Psoas muscle (tissue), 8 donors: ENCODE measurements at regions of chr17 and their contacts with region 1.

Region 1: GRCh38 chr17:2094891-2095535 is 40.1 kb downstream of the HIC1 start:
- DNase-seq: peak in 1 of 2 donors; percentile 75
- ATAC-seq: peak; percentile 81 to 88 (median 86)
- H3K4me3 ChIP-seq: no peak overlapping the region
- H3K27ac ChIP-seq: peak overlapping the region; percentile 2
- H3K4me1 ChIP-seq: peaks cover 6% of the 10 kb centered on the region
- H3K27me3 ChIP-seq: no peaks in the 10 kb centered on the region
- CTCF ChIP-seq: peak; percentile 57

Region 2: DNA sequence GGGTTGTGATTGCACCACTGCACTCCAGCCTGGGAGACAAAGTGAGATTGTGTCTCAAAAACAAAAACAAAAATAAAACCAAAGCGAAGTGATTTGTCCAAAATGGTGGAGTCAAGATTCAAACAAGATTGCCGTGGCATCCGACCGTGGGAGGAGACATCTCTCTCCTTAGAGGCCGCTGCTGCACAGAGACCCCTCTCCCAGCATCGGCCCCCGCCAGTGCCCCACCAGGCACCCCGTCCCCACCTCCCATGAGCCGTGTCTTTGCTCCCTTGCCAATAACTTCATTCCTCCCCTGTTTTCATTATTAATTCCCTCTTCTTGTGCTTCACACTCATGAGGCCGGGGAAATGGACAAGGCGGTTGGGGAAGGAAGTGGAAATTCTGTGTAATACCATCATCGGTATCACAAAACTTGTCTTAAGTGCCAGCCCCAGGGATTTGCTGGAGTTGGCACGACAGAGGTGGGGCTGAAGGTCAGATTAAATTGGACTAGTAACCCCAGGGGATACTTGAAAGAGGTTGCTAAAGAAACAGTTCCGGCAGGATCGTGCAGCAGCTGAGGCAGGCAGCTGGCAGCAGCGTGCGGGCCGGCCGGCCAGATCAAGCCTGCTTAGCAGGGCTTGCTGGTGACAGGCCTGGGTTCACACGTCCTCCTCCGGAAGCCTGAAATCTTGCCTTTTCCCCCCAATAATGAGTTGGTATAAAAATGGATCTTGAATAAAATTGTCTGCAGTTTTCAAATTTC is 136.7 kb before region 1 on chr17:
- intact Hi-C with region 1: no loop called
- DNase-seq: no peak
- ATAC-seq: peak; percentile 55 to 76 (median 67)
- H3K4me3 ChIP-seq: no peak overlapping the region
- H3K27ac ChIP-seq: peak overlapping the region; percentile 7
- H3K4me1 ChIP-seq: peaks cover 13% of the 10 kb centered on the region
- H3K27me3 ChIP-seq: no peaks in the 10 kb centered on the region
- CTCF ChIP-seq: no peak

Region 3: DNA sequence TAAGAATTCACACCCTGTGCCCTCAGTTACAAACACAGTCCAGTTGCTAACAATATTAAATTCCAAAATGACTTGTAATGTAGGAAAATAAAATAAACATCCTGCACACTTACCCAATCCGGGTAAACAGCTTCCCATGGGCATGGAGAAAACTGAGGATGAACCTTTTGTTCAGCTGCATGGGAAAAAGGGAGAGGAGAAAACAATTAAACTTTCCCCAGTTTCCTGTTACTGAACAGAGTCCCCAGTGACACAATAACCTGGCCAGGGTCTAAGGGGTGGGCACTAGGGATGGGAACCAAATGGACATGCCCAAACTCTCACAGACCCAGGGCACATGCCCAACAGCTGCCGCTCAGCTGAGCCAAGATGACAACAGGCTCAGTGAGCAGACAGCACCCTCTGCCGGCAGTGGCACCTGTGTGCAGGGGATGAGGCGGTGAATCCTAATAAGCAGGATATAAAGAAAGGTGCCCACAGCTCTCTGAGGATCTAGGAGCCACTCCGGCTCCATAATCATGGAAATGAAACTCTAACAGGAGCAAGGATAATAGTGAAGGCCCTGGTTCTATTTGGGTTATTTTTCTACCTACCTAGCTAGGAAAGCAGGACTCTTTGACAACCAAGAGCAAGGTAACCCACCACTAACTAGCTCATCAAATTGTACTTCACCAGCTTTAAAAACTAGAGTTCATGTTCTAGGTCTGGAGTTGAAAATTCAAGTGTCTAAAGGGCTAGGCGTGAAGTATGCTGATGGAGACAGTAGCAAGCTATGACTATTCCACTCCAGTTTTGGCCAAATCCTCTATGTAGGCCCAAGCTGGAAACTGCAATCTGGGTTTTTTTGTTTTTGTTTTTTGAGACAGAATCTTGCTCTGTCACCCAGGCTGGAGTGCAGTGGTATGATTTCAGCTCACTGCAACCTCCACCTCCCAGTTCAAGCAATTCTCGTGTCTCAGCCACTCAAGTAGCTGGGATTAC is 149.8 kb after region 1 on chr17:
- intact Hi-C with region 1: loop called (anchors 1 to 10 kb)
- DNase-seq: peak; percentile 89 to 95
- ATAC-seq: peak; percentile 91 to 95 (median 94)
- H3K4me3 ChIP-seq: no peak overlapping the region
- H3K27ac ChIP-seq: peak overlapping the region; percentile 71
- H3K4me1 ChIP-seq: peaks cover 8% of the 10 kb centered on the region
- H3K27me3 ChIP-seq: no peaks in the 10 kb centered on the region
- CTCF ChIP-seq: peak; percentile 99